ENCODE measurements at regions of chr11 and their contacts with region 1.

Region 1: DNA sequence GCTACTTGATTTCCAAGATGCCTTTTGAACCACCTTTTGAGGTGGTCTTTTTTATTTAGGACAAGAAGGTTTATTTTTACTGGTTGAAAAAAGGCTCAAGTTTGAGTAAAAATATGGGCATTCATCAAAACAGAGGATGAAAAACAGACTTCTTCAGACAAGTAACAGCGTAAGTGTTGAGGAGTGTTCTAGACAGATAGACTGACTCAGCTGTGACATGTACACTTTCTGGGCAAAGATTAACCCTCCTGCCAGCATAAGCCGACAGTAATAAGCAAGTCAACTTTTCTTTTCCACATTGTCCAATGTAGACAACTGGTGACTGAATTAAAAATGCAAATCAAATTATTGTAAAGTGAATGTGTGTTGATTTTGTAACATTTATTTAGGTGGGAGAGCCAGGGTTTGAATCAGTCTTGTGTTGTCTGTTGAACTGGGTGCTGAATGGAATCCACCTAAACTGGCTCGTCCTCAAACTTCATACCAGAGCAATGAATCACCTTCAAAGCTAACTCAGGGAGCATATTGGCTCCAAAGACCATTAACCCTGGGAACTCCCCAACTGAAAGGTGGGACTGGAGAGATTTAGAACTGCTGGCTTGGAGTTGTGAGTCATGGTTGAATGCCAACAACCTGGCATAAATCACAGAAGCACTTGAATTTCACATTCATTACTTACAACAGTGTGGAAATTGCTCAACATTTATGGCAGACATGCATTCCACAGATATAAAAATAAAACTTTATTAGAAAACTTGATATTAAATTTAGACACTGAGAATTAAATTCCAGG is 377.0 kb downstream of the ETS1 start:
- DNase-seq: peak; percentile 98
- H3K4me3 ChIP-seq: peak overlapping the region in 1 of 3 experiments; percentile 44
- H3K27ac ChIP-seq: peak overlapping the region; percentile 97
- H3K4me1 ChIP-seq: peaks cover 49% of the 10 kb centered on the region
- H3K27me3 ChIP-seq: no peaks in the 10 kb centered on the region
- CTCF ChIP-seq: no peak
- POLR2A ChIP-seq: no peak

Region 2: DNA sequence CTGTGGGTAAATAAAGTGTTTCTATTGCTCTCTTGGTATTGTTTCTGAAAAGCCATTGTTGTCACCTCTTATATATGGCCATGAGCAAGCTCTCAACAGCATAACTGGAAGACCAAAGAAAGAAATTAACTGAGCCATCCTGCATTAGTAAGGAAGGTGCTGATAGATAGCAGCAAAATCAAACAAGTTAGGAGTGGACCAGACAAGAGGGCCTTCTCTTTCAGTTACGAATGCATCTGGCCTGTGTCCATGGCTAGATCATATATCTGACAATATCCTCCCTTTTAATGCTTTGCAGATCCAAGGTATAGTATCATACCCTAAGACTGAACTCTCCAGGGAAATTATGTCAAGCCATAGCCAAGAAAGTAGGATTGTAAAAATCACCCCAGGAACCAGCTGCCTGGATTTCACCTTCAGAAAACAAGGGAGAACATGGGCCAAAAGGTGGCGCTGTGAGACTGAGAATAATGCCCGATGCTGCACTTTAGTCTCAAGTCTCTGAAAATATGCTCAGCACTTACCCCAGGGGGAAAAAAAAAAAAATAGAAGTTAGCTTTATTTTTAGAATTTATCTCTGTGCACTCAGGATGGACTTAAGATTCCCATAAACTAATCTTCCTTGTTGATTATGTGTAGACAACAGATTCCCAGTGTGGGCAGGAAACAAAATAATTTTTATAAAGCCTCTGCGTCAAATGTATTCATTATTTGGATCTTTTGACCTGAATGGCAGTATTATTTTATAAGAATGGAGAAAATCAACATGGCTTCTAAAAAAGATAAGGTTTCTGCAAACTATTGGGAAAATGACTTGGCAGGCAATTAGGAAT is 38.1 kb before region 1 on chr11:
- CTCF ChIA-PET with region 1: interaction called, 11 read pairs
- POLR2A ChIA-PET with region 1: no interaction called
- dilution Hi-C with region 1: no loop called
- intact Hi-C with region 1: no loop called
- DNase-seq: peak; percentile 91
- H3K4me3 ChIP-seq: no peak overlapping the region
- H3K27ac ChIP-seq: peak overlapping the region; percentile 42
- H3K4me1 ChIP-seq: peaks cover 9% of the 10 kb centered on the region
- H3K27me3 ChIP-seq: no peaks in the 10 kb centered on the region
- CTCF ChIP-seq: peak; percentile 64 to 74
- POLR2A ChIP-seq: no peak

Region 3: GRCh38 chr11:128195057-128195751 is 15.1 kb before region 1 on chr11:
- CTCF ChIA-PET with region 1: interaction called, 6 read pairs
- POLR2A ChIA-PET with region 1: no interaction called
- dilution Hi-C with region 1: no loop called
- intact Hi-C with region 1: loop called (anchors 1 kb)
- DNase-seq: peak; percentile 98
- H3K4me3 ChIP-seq: no peak overlapping the region
- H3K27ac ChIP-seq: peak overlapping the region; percentile 65
- H3K4me1 ChIP-seq: peaks cover 12% of the 10 kb centered on the region
- H3K27me3 ChIP-seq: no peaks in the 10 kb centered on the region
- CTCF ChIP-seq: peak in 1 of 2 donors; percentile 9
- POLR2A ChIP-seq: peak; percentile 60

Region 4: DNA sequence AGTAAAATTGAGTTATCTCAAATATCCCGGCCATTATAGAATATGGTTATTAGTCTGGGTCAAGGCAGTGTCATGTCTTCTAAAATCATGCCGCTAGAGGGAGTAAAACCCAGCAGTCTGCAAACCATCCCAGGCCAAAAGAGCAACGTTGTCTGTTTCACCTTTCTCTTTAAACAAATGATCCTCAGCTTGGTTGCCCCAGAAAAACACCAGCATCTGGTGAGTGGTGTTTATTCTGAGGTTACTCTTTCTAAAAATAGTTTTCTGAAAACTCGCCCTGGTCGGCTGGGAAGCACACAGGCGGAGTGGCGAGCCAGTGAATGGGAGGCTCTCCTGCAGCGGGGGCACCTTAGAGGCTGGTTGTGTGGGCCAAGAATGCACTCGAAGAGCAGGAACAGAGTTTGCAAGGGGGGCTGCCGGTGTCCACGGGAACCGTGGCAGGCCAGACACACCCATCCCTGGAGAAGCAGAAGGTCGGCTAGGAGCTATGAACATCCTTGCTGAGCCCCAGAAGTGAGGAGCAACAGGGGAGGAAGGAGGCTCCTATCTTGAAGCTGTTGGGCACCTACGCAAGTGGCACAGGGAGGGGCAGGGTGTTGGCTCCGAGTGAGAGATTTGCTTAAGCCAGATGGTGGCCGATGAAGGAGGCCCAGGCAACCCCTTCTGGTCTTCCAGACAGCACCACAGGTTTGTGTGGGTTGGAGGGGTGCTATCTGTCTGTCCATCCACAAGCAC is 79.9 kb after region 1 on chr11:
- CTCF ChIA-PET with region 1: no interaction called
- POLR2A ChIA-PET with region 1: no interaction called
- dilution Hi-C with region 1: no loop called
- intact Hi-C with region 1: loop called (anchors 1 kb)
- DNase-seq: peak; percentile 77
- H3K4me3 ChIP-seq: no peak overlapping the region
- H3K27ac ChIP-seq: no peak overlapping the region
- H3K4me1 ChIP-seq: no peaks in the 10 kb centered on the region
- H3K27me3 ChIP-seq: no peaks in the 10 kb centered on the region
- CTCF ChIP-seq: peak; percentile 71 to 72
- POLR2A ChIP-seq: no peak

Region 5: DNA sequence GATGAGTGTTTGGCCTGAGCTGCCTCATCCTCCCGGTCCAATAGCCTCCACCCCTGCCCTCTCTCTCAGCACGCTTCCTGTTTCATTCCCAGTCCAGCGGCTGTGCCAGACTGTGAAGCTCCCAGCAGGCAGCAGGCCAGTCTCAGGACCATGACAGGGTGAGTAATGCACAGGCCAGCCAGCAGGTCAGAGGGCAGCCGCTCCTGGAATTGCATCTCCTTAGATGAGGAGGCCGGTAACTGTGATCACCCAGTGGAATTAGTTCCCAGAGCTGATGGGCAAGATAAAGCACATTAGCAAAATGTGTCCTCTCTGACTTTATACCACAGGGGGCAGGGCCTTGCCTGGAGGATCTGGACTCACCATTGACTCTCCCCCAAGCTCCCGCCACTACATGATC is 125.9 kb after region 1 on chr11:
- CTCF ChIA-PET with region 1: no interaction called
- POLR2A ChIA-PET with region 1: interaction called, 3 read pairs
- dilution Hi-C with region 1: no loop called
- intact Hi-C with region 1: loop called (anchors 1 kb)
- DNase-seq: peak; percentile 88
- H3K4me3 ChIP-seq: no peak overlapping the region
- H3K27ac ChIP-seq: peak overlapping the region; percentile 87
- H3K4me1 ChIP-seq: peaks cover 43% of the 10 kb centered on the region
- H3K27me3 ChIP-seq: no peaks in the 10 kb centered on the region
- CTCF ChIP-seq: no peak
- POLR2A ChIP-seq: peak; percentile 17

Region 6: GRCh38 chr11:128497061-128497775 is 286.9 kb after region 1 on chr11:
- CTCF ChIA-PET with region 1: no interaction called
- POLR2A ChIA-PET with region 1: no interaction called
- dilution Hi-C with region 1: no loop called
- intact Hi-C with region 1: loop called (anchors 1 kb)
- DNase-seq: peak; percentile 96
- H3K4me3 ChIP-seq: peak overlapping the region in 1 of 3 experiments; percentile 28
- H3K27ac ChIP-seq: peak overlapping the region; percentile 94
- H3K4me1 ChIP-seq: peaks cover 67% of the 10 kb centered on the region
- H3K27me3 ChIP-seq: no peaks in the 10 kb centered on the region
- CTCF ChIP-seq: no peak
- POLR2A ChIP-seq: no peak

Region 7: GRCh38 chr11:128709402-128709801 is 499.1 kb after region 1 on chr11:
- CTCF ChIA-PET with region 1: interaction called, 3 read pairs
- POLR2A ChIA-PET with region 1: no interaction called
- dilution Hi-C with region 1: no loop called
- intact Hi-C with region 1: loop called (anchors 2 kb)
- DNase-seq: peak; percentile 99
- H3K4me3 ChIP-seq: no peak overlapping the region
- H3K27ac ChIP-seq: peak overlapping the region; percentile 97
- H3K4me1 ChIP-seq: peaks cover 88% of the 10 kb centered on the region
- H3K27me3 ChIP-seq: no peaks in the 10 kb centered on the region
- CTCF ChIP-seq: peak in 1 of 2 donors; percentile 5
- POLR2A ChIP-seq: peak; percentile 85

Measured in endothelial cell of umbilical vein (primary cell).